PC-9 (cell line): ENCODE measurements at regions of chr9 and their contacts with region 1.

Region 1: DNA sequence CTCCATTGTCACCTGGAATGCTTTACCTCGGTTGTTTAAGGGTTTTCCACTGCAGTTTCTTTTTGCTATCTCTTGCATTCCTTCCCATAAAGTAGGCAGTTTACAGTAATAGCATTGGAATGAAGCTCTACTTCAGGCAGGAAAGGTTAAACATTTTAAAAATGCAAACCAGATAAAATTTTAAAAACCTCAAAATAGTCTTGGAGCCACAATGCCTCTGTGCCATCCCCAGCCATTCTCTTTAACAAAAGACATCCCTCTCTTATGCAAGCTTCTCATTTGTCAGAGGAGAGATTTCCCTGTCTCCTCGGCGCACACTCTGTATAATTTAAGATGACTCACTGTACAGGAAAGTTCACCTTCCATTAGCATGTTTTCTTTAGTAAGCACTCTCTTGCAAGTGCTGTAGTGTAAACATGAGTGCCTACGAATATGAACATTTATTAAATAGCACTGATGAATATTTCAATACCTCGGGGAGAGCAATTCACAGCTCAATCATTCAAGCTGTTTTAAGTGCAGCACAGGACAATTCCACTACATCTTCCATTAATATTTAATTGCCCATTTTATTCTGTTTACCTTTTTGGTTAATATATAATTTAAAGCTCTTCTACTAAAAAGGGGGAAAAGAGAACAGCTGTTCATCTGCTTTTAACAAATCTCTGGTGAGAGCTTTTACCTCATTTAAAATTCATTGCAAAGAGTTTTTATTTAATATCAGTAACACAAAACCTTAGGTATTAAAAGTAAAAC is 343.6 kb downstream of the SPATA31D1 start:
- DNase-seq: peak; percentile 49 to 74
- H3K4me3 ChIP-seq: peak overlapping the region; percentile 4; the same call in 1 of the 2 replicates
- H3K27ac ChIP-seq: peak overlapping the region; percentile 40
- H3K4me1 ChIP-seq: peaks cover 20% of the 10 kb centered on the region
- H3K27me3 ChIP-seq: no peaks in the 10 kb centered on the region
- CTCF ChIP-seq: no peak

Region 2: DNA sequence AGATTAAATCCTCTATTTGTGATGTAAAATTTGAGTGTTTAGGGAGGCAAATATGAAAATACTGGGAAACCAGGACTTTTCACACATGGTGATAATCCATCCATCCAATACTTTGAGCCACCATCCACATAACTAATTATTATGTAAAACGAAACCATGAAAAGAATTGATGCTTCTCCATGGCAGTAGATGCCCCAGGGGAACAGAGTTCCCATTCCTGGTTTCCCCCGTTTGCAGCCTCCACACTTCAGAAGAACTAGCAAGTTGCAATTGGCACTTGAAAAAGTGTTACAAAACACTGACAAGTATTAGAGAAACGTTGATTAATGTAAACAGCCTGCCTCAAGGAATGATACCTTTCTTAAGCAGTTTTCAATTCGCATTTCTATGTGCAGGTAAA is 633.1 kb before region 1 on chr9:
- CTCF ChIA-PET with region 1: no interaction called
- POLR2A ChIA-PET with region 1: interaction called, 14 read pairs
- intact Hi-C with region 1: no loop called
- DNase-seq: no peak
- H3K4me3 ChIP-seq: no peak overlapping the region
- H3K27ac ChIP-seq: no peak overlapping the region
- H3K4me1 ChIP-seq: no peaks in the 10 kb centered on the region
- H3K27me3 ChIP-seq: no peaks in the 10 kb centered on the region
- CTCF ChIP-seq: no peak

Region 3: DNA sequence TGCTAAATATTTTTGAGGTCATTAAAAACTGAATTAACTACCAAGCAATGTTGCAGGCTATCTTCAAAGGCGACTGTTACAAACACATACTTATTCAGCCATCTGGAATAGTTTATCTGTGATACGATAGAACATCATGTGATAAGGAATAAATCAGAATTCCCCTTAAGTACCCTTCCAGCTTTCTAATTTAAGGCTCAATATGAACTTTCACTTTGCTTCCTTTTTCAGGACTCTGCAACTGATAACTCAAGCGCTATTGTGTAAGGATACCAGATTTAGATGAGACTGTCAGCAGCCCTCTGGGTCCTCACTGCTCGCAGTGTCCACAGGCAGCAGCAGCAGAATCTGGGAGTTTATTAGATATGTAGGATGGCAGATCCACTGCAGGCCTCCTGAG is 72.7 kb after region 1 on chr9:
- CTCF ChIA-PET with region 1: no interaction called
- POLR2A ChIA-PET with region 1: no interaction called
- intact Hi-C with region 1: no loop called
- DNase-seq: no peak
- H3K4me3 ChIP-seq: no peak overlapping the region
- H3K27ac ChIP-seq: no peak overlapping the region
- H3K4me1 ChIP-seq: no peaks in the 10 kb centered on the region
- H3K27me3 ChIP-seq: no peaks in the 10 kb centered on the region
- CTCF ChIP-seq: no peak